CD4-positive, alpha-beta T cell (primary cell): ENCODE measurements at regions of chr1 and their contacts with region 1.

Region 1: DNA sequence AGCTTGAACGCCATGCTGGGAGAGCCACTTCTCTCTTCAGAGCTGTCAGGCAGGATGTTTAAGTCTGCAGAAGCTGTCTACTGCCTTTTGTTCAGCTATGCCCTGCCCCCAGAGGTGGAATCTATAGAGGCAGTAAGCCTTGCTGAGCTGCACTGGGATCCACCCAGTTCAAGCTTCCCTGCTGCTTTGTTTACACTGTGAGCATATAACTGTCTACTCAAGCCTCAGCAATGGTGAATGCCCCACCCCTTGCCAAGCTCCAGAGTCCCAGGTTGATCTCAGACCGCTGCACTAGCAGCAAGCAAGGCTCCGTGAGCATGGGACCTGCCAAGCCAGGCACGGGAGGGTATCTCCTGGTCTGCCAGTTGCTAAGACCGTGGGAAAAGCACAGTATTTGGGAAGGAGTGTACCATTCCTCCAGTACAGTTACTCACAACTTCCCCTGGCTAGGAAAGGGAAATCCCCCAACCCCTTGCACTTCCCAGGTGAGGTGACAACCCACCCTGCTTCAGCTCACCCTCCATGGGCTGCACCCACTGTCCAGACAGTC is 32.6 kb downstream of the RGS13 start:
- DNase-seq: no peak
- ATAC-seq: no peak
- H3K4me3 ChIP-seq: no peak overlapping the region
- H3K4me3 Mint-ChIP-seq: no peak overlapping the region
- H3K27ac ChIP-seq: no peak overlapping the region
- H3K27ac Mint-ChIP-seq: no peak overlapping the region
- H3K4me1 ChIP-seq: no peaks in the 10 kb centered on the region
- H3K4me1 Mint-ChIP-seq: no peaks in the 10 kb centered on the region
- H3K27me3 ChIP-seq: no peaks in the 10 kb centered on the region
- H3K27me3 Mint-ChIP-seq: peaks cover 13% of the 10 kb centered on the region
- CTCF ChIP-seq: no peak

Region 2: DNA sequence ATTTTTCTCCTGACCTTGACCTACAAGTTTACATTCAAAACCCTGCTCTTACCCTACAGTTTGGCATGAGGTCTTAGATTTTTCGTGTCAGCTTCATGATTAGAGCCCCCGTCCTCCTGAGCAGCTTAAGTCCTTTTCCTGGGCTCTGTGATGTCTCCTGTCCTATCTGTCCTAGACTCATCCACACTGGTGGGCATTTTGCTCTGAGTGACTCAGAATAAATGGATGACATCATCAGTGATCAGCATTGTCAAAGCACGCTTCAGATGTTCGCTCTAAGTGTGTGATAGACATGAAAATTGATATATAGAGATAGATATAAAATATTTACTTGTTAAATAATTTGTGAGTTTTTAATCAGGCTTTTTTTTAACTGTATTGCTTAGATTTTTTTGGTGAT is 10.7 kb before region 1 on chr1:
- CTCF ChIA-PET with region 1: no interaction called
- POLR2A ChIA-PET with region 1: no interaction called
- intact Hi-C with region 1: loop called in 1 of 2 experiments (anchors 1 kb)
- DNase-seq: no peak
- ATAC-seq: no peak
- H3K4me3 ChIP-seq: no peak overlapping the region
- H3K4me3 Mint-ChIP-seq: no peak overlapping the region
- H3K27ac ChIP-seq: no peak overlapping the region
- H3K27ac Mint-ChIP-seq: no peak overlapping the region
- H3K4me1 ChIP-seq: no peaks in the 10 kb centered on the region
- H3K4me1 Mint-ChIP-seq: no peaks in the 10 kb centered on the region
- H3K27me3 ChIP-seq: no peaks in the 10 kb centered on the region
- H3K27me3 Mint-ChIP-seq: no peaks in the 10 kb centered on the region
- CTCF ChIP-seq: no peak